ENCODE measurements at regions of chr13 and their contacts with region 1.

Region 1: GRCh38 chr13:66635526-66635925 is 594.6 kb downstream of the PCDH9 start:
- DNase-seq: peak; percentile 69
- ATAC-seq: peak; percentile 100
- H3K4me3 ChIP-seq: no peak overlapping the region
- H3K27ac ChIP-seq: no peak overlapping the region
- H3K4me1 ChIP-seq: peaks cover 10% of the 10 kb centered on the region; the same call in 1 of the 2 replicates
- H3K27me3 ChIP-seq: no peaks in the 10 kb centered on the region
- CTCF ChIP-seq: no peak

Region 2: GRCh38 chr13:65943024-65943423 is 692.5 kb before region 1 on chr13:
- CTCF ChIA-PET with region 1: no interaction called
- POLR2A ChIA-PET with region 1: no interaction called
- intact Hi-C with region 1: loop called (anchors 10 kb)
- DNase-seq: peak; percentile 16
- ATAC-seq: peak; percentile 33
- H3K4me3 ChIP-seq: no peak overlapping the region
- H3K27ac ChIP-seq: no peak overlapping the region
- H3K4me1 ChIP-seq: peaks cover 12% of the 10 kb centered on the region
- H3K27me3 ChIP-seq: no peaks in the 10 kb centered on the region
- CTCF ChIP-seq: no peak

Region 3: DNA sequence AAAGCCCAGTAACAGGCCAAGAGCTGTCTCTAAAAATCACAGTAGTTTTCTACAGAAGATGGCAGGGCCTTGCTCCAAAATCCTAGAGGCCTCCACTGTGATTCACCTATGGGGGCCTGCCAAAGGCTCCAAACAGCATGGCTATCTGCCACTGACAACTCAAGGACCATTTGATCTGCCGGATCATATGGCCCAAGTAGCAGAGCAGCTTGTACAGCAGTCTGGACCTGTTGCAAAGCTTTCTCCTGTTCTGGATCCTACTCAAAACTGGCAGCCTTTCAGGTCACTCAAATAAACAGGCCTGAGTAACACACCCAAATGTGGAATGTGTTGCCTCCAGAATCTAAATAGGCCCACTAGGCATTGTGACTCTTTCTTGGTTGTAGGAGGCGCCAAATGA is 454.7 kb before region 1 on chr13:
- CTCF ChIA-PET with region 1: no interaction called
- POLR2A ChIA-PET with region 1: no interaction called
- intact Hi-C with region 1: no loop called
- DNase-seq: peak; percentile 9
- ATAC-seq: no peak
- H3K4me3 ChIP-seq: no peak overlapping the region
- H3K27ac ChIP-seq: no peak overlapping the region
- H3K4me1 ChIP-seq: no peaks in the 10 kb centered on the region
- H3K27me3 ChIP-seq: no peaks in the 10 kb centered on the region
- CTCF ChIP-seq: no peak

Region 4: GRCh38 chr13:66657165-66657881 is 21.8 kb after region 1 on chr13:
- CTCF ChIA-PET with region 1: no interaction called
- POLR2A ChIA-PET with region 1: no interaction called
- intact Hi-C with region 1: loop called (anchors 1 kb)
- DNase-seq: peak; percentile 97
- ATAC-seq: peak; percentile 96
- H3K4me3 ChIP-seq: no peak overlapping the region
- H3K27ac ChIP-seq: peak overlapping the region; percentile 82
- H3K4me1 ChIP-seq: peaks cover 25% of the 10 kb centered on the region
- H3K27me3 ChIP-seq: no peaks in the 10 kb centered on the region
- CTCF ChIP-seq: no peak

Region 5: GRCh38 chr13:66830940-66831716 is 195.6 kb after region 1 on chr13:
- CTCF ChIA-PET with region 1: no interaction called
- POLR2A ChIA-PET with region 1: no interaction called
- intact Hi-C with region 1: no loop called
- DNase-seq: no peak
- ATAC-seq: peak; percentile 29
- H3K4me3 ChIP-seq: no peak overlapping the region
- H3K27ac ChIP-seq: no peak overlapping the region
- H3K4me1 ChIP-seq: no peaks in the 10 kb centered on the region
- H3K27me3 ChIP-seq: no peaks in the 10 kb centered on the region
- CTCF ChIP-seq: no peak

Region 6: DNA sequence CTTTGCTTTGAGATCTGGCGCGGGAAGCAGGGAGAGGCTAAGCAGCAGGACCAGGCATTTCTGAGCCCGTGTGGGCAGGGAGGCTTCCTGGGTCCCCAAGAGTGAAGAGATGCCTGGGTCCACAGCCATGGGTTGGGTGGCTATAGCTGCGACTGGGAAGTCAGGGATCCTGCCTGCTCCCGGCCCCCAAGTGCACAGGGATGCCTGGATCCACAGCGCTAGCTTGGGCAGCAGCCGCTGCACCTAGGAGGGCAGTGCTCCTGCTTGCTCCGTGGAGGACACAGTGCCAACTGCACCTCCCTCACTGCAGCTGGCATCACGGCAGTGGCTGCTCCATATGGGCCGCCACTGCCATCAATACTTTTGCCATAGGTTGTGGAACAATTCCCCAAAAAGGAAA is 209.9 kb after region 1 on chr13:
- CTCF ChIA-PET with region 1: no interaction called
- POLR2A ChIA-PET with region 1: no interaction called
- intact Hi-C with region 1: no loop called
- DNase-seq: no peak
- ATAC-seq: no peak
- H3K4me3 ChIP-seq: no peak overlapping the region
- H3K27ac ChIP-seq: no peak overlapping the region
- H3K4me1 ChIP-seq: no peaks in the 10 kb centered on the region
- H3K27me3 ChIP-seq: no peaks in the 10 kb centered on the region
- CTCF ChIP-seq: no peak

Region 7: GRCh38 chr13:68290751-68291150 is 1655.2 kb after region 1 on chr13:
- CTCF ChIA-PET with region 1: no interaction called
- POLR2A ChIA-PET with region 1: no interaction called
- intact Hi-C with region 1: no loop called
- DNase-seq: no peak
- ATAC-seq: no peak
- H3K4me3 ChIP-seq: no peak overlapping the region
- H3K27ac ChIP-seq: no peak overlapping the region
- H3K4me1 ChIP-seq: no peaks in the 10 kb centered on the region
- H3K27me3 ChIP-seq: no peaks in the 10 kb centered on the region
- CTCF ChIP-seq: no peak